ENCODE measurements at regions of chr1 and their contacts with region 1.

Region 1: DNA sequence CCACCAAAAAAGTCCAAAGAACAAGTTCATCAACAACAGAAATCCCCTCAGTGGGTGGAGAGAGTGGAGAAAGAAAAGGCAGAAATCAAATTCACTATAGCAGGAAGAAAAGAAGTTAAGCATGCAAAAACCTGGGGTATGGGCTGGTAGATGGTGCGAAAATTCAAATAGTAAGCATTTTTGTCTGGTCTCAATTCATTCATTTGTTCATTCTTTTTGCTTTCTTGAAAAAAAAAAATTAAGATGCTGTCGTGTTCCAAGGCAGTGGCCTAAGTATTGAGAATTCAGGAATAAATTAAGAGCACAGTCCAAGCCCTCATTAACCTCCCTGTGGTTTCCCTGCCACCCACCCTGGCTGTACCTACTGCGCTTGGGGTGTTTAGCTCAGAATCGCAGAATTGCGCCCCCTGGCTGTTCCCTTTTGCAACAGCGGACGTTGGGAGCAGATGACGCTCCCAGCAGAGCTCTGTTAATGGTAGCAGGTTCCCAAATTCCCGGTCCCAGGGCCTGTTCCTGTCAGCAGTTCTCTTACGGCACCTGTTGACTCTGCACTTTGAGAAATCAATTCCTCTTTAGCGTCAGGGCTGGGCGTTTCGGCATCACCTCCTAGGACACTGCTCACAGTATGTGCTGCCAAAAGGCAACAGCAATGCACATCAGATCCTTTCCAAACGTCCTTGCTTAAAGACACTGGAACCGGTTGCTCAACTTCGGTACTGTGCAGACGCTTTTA is 34.0 kb upstream of the SSX2IP start:
- DNase-seq: peak; percentile 74
- ATAC-seq: peak; percentile 64
- H3K4me3 Mint-ChIP-seq: no peak overlapping the region
- H3K27ac Mint-ChIP-seq: no peak overlapping the region
- H3K4me1 Mint-ChIP-seq: peaks cover 18% of the 10 kb centered on the region
- H3K27me3 Mint-ChIP-seq: no peaks in the 10 kb centered on the region

Region 2: DNA sequence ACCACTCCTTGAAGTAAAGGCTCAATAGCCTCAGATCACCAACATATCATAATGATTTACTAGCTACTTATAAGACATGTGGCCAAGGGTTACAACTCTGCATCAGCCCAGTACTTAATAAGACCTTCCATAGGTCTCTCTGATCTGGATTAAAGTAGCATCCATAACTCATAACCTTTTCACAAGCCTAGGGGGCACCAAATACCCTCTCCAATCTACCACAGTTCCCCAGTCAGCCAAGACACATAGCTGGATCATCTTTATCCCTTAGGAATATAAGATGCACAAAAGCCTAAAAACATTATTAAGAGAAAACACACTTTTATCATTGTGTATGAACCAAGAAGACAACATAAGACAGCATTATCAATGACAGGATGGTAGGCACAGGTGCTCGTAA is 56.1 kb before region 1 on chr1:
- CTCF ChIA-PET with region 1: interaction called, 11 read pairs
- POLR2A ChIA-PET with region 1: no interaction called
- intact Hi-C with region 1: loop called (anchors 1 to 2 kb)
- DNase-seq: no peak
- ATAC-seq: no peak
- H3K4me3 Mint-ChIP-seq: no peak overlapping the region
- H3K27ac Mint-ChIP-seq: no peak overlapping the region
- H3K4me1 Mint-ChIP-seq: peaks cover 5% of the 10 kb centered on the region
- H3K27me3 Mint-ChIP-seq: no peaks in the 10 kb centered on the region

Region 3: DNA sequence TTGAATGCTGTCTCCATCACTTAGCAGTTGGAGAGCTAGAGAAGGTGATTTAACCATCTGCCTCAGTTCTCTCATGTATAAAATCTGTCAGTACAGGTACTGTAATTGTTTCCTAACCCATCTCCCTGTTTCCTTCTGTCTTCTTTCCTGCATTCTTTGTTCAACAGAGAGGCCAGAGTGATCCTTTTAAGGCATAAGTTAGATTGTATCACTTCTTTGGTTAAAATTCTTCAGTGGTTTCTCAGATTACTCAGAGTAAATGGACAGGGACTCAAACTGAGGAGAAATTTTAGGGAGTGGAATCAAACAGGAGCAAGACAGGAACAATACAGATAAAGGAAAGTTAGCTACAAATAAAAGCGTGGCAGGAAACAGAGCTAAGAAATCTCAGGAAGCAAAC is 11.2 kb after region 1 on chr1:
- CTCF ChIA-PET with region 1: interaction called, 28 read pairs
- POLR2A ChIA-PET with region 1: no interaction called
- intact Hi-C with region 1: no loop called
- DNase-seq: no peak
- ATAC-seq: no peak
- H3K4me3 Mint-ChIP-seq: no peak overlapping the region
- H3K27ac Mint-ChIP-seq: no peak overlapping the region
- H3K4me1 Mint-ChIP-seq: no peaks in the 10 kb centered on the region
- H3K27me3 Mint-ChIP-seq: peaks cover 22% of the 10 kb centered on the region

Region 4: GRCh38 chr1:85406887-85407533 is 682.7 kb after region 1 on chr1:
- CTCF ChIA-PET with region 1: no interaction called
- POLR2A ChIA-PET with region 1: no interaction called
- intact Hi-C with region 1: no loop called
- DNase-seq: no peak
- ATAC-seq: no peak
- H3K4me3 Mint-ChIP-seq: no peak overlapping the region
- H3K27ac Mint-ChIP-seq: no peak overlapping the region
- H3K4me1 Mint-ChIP-seq: no peaks in the 10 kb centered on the region
- H3K27me3 Mint-ChIP-seq: no peaks in the 10 kb centered on the region